Panc1 (cell line): ENCODE measurements at regions of chr2 and their contacts with region 1.

Region 1: GRCh38 chr2:112481050-112481527 is 867 bp upstream of the TTL start:
- DNase-seq: peak; percentile 62
- ATAC-seq: peak; percentile 90
- H3K4me3 ChIP-seq: peak overlapping the region; percentile 77 to 94
- H3K27ac ChIP-seq: peak overlapping the region; percentile 80
- H3K4me1 ChIP-seq: peaks cover 16% of the 10 kb centered on the region
- H3K27me3 ChIP-seq: no peaks in the 10 kb centered on the region
- CTCF ChIP-seq: peak; percentile 95

Region 2: DNA sequence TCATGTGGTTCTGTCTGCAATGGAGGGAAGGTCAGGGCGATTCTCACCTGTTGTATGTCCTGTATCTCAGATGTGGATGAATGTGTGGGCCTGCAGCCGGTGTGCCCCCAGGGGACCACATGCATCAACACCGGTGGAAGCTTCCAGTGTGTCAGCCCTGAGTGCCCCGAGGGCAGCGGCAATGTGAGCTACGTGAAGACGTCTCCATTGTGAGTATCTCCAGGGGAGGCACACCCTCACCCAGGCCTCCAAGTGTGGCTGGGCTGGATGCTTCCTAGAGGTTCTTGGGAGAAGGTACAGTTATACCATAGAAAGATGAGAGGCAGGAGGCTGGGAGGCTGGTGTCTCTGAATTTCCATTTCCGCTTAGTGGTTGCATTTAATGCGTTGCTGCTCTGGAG is 296.0 kb before region 1 on chr2:
- CTCF ChIA-PET with region 1: no interaction called
- POLR2A ChIA-PET with region 1: interaction called, 15 read pairs
- in situ Hi-C with region 1: no loop called
- intact Hi-C with region 1: no loop called
- DNase-seq: no peak
- ATAC-seq: no peak
- H3K4me3 ChIP-seq: no peak overlapping the region
- H3K27ac ChIP-seq: no peak overlapping the region
- H3K4me1 ChIP-seq: no peaks in the 10 kb centered on the region
- H3K27me3 ChIP-seq: no peaks in the 10 kb centered on the region; the same call in 1 of the 2 replicates
- CTCF ChIP-seq: no peak

Region 3: DNA sequence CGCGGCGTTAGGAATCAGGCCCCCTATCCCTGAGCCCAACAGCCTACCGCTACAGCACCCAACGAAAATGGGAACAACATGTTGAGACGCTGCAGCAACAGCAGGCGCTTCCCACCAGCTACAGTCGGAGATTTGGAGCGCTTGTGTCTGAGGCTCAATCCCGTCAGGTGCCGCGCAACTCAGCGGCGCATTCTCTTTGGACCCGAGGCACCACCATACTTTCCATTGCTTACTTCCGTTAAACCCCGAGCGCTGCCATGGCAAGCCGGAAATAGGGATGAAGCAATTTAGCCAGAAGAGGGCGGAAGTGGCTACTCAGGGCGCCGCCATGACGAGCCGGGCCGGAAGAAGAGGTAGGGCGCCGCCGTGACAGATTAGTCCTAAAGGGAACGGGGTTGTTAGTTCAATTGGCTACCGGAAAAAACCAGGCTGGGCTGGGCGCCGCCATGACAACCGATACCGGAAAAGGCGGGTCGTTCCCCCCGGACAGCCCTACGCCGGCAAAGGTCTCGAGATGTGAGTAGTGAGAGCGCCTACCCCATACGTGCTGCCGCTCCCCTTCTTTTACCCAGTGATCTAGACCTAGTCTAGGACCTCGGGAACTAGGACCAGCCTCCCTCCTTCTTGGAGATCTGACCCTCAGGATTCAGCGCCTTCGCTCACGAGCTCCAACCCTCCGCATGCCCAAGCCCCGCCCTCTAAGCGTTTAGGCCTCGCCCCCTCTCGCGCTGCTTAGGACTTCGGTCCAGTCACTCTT is 103.2 kb after region 1 on chr2 and contains the start of gene CHCHD5:
- CTCF ChIA-PET with region 1: no interaction called
- POLR2A ChIA-PET with region 1: no interaction called
- in situ Hi-C with region 1: no loop called
- intact Hi-C with region 1: loop called (anchors 5 kb)
- DNase-seq: peak; percentile 69
- ATAC-seq: peak; percentile 91
- H3K4me3 ChIP-seq: peak within 1 kb of the TSS; percentile 74 to 81
- H3K27ac ChIP-seq: peak within 1 kb of the TSS; percentile 97
- H3K4me1 ChIP-seq: peaks cover 18% of the 10 kb centered on the region
- H3K27me3 ChIP-seq: no peaks in the 10 kb centered on the region
- CTCF ChIP-seq: no peak
- total RNA-seq, gene CHCHD5: 46.7 TPM